AG04450 (cell line): ENCODE measurements at regions of chr12 and their contacts with region 1.

Region 1: GRCh38 chr12:117212563-117213190 is 22.4 kb upstream of the FBXO21 start:
- DNase-seq: peak; percentile 60
- H3K4me3 ChIP-seq: no peak overlapping the region
- H3K27ac ChIP-seq: no peak overlapping the region
- H3K27me3 ChIP-seq: no peaks in the 10 kb centered on the region
- CTCF ChIP-seq: peak; percentile 94

Region 2: DNA sequence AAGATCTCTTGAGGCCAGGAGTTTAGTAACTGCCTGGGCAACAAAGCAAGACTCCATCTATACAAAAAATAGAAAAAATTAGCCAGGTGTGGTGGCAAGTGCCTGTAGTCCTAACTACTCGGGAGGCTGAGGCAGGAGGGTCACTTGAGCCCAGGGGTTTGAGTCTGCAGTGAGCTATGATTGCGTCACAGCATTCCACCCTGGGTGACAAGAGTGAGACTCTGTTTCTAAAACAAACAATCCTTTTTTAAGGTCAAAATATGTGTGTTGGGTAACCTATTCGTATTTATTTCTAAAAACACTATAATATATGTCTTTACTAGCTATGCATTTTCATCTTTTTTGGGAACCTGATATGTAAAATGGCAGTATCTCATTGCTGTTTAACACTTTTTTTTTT is 29.8 kb before region 1 on chr12:
- CTCF ChIA-PET with region 1: no interaction called
- POLR2A ChIA-PET with region 1: no interaction called
- DNase-seq: no peak
- H3K4me3 ChIP-seq: no peak overlapping the region
- H3K27ac ChIP-seq: no peak overlapping the region
- H3K27me3 ChIP-seq: no peaks in the 10 kb centered on the region
- CTCF ChIP-seq: no peak

Region 3: GRCh38 chr12:117202556-117202955 is 10.1 kb before region 1 on chr12:
- CTCF ChIA-PET with region 1: interaction called, 27 read pairs
- POLR2A ChIA-PET with region 1: no interaction called
- DNase-seq: no peak
- H3K4me3 ChIP-seq: no peak overlapping the region
- H3K27ac ChIP-seq: no peak overlapping the region
- H3K27me3 ChIP-seq: peaks cover 5% of the 10 kb centered on the region
- CTCF ChIP-seq: no peak

Region 4: GRCh38 chr12:117850048-117850447 is 637.4 kb after region 1 on chr12:
- CTCF ChIA-PET with region 1: interaction called, 20 read pairs
- POLR2A ChIA-PET with region 1: no interaction called
- DNase-seq: no peak
- H3K4me3 ChIP-seq: no peak overlapping the region
- H3K27ac ChIP-seq: no peak overlapping the region
- H3K27me3 ChIP-seq: no peaks in the 10 kb centered on the region
- CTCF ChIP-seq: peak; percentile 88

Region 5: DNA sequence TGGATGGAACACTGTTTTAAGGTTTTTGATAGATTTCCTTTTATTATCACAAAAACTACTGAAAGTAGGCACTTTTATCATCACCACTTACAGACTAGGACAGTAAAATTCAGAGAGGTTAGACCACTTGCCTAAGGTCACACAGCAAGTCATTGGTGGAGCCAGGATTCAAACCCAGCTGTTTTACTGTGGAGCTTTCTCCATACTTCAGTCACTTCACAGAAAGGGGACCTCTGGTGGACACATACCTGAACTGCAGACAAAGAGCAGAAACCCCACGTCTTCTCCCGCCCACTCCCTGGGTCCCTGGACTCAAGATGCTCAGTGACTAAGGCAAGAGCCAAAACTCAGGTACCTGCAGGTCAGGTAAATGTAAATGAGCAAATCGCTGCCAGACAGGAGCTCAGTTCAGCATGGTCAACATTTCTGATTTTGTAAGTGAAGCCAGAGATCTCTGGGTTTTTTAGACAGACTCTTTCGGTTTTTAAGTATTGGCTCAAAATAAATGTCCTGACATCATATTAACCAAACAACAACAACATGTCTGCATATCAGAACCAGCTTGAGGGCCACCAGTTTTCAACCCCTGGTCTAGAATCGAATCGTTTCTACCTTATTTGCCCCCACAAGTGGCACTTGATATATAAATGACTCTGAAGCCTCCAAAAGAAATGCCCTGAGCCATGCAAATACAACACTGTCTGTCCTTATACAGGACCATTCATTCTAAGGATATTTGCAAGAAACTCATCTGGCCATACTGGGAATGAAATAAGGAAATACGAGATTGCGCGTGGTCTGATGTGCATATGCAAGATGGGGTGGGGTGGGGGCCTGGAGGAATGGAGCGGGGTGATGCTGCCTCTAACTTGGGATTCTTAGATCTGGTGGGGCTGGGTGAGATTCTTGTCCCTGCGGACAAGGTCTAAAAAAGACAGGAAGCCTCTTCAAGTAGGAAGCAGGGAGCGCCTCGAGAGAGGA is 645.2 kb after region 1 on chr12:
- CTCF ChIA-PET with region 1: interaction called, 21 read pairs
- POLR2A ChIA-PET with region 1: interaction called, 3 read pairs
- DNase-seq: no peak
- H3K4me3 ChIP-seq: no peak overlapping the region
- H3K27ac ChIP-seq: no peak overlapping the region
- H3K27me3 ChIP-seq: no peaks in the 10 kb centered on the region
- CTCF ChIP-seq: peak; percentile 52